ENCODE measurements at regions of chr12 and their contacts with region 1.

Region 1: DNA sequence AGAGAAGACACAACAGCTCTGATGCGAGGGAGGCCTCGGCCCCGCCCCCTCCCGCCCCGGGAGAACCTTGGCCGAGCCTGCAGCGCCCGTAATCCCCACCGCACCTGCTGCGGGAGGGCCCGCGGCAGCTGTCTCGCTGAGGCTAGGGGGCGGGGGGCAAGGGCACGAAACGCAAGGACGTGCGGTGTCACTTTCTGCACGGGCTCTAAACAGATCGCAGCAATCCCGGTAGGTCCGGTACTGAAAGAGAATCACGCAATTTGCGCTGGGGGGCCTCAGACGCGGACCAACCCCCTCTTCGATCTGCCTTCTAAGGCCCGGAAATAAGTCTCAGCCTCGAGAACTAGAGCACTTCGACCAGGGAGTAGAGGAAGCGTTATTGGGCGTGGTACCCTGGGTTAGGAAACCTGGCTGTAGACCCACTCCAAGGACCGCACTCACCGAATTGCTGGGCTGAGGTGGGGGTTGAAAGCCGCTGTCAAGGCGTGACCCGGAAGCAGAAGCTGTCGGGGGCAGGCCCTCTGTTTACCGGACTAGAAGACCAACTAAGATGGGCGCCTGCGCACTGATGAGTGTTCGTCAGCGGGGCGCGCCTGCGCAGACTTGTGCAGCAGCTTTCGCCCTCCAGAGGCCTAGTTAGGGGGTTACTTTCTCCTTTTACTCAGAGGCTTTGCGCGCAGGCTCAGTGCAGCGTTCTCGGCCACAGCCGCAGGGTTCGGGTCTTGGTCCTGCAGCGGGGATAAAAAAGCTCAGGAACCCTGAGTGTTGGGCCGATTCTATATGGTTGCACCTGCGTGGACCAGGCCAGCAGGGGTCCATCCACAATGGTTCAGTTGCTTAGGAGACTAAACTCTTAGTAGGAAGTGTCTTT is at the start of gene ASB8:
- DNase-seq: peak; percentile 99
- ATAC-seq: peak; percentile 96
- H3K4me3 Mint-ChIP-seq: peak within 1 kb of the TSS; percentile 89
- H3K27ac Mint-ChIP-seq: peak within 1 kb of the TSS; percentile 91
- H3K4me1 Mint-ChIP-seq: peaks cover 14% of the 10 kb centered on the region
- H3K27me3 Mint-ChIP-seq: no peaks in the 10 kb centered on the region; the same call in none of the 2 replicates
- CTCF ChIP-seq: no peak
- total RNA-seq, gene ASB8: 7.4 to 11.3 TPM (median 8.8 TPM) in 3 replicates

Region 2: GRCh38 chr12:47941851-47942601 is 215.2 kb before region 1 on chr12:
- CTCF ChIA-PET with region 1: interaction called, 11 read pairs
- POLR2A ChIA-PET with region 1: no interaction called
- DNase-seq: peak; percentile 89
- ATAC-seq: peak; percentile 93
- H3K4me3 Mint-ChIP-seq: peak overlapping the region; percentile 15; the same call in 1 of the 2 replicates
- H3K27ac Mint-ChIP-seq: no peak overlapping the region
- H3K4me1 Mint-ChIP-seq: peaks cover 20% of the 10 kb centered on the region
- H3K27me3 Mint-ChIP-seq: peaks cover 32% of the 10 kb centered on the region
- CTCF ChIP-seq: peak; percentile 48

Region 3: DNA sequence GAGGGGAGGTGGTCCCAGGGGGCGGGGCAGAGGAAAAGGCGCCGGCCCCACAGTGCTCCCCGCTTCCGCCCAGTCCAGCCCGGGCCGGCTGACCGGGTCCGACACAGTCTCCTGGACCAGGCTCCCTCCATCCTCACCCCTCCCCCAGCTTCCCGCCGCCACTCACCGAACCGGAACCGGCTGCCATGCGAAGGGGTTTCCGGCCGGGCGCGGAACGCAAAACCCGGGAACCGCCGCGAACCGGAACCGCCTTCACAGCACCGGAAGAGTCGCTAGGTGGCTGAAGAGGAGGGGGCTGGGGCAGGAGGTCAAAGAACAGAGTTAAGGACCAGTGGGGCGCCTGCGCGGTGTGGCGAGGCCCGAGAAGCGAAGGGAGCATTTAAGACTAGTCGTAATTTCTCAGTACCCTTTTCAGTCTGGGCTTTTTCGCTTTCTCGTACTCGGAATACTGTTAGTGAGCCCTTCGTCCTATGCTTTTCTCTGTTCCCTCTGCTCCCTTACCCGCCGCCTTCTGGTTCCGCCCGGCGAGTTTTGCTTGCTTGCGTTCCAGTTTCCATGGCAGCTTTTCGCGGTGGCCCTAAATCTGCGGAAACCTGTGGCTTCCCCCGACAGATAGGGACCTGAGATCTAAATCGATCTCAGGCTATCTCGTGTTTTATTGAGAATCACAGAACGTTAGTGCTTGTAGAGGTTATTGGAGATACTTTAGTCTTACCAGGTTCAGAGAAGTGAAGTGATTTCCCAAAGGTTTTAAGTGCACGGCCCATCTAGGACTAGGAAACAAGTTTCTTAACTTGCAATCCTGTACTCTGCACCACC is 51.2 kb before region 1 on chr12 and contains the start of gene SENP1:
- CTCF ChIA-PET with region 1: interaction called, 15 read pairs
- POLR2A ChIA-PET with region 1: interaction called, 6 read pairs
- DNase-seq: peak; percentile 93
- ATAC-seq: peak; percentile 89
- H3K4me3 Mint-ChIP-seq: peak within 1 kb of the TSS; percentile 93
- H3K27ac Mint-ChIP-seq: peak within 1 kb of the TSS; percentile 98
- H3K4me1 Mint-ChIP-seq: peaks cover 16% of the 10 kb centered on the region
- H3K27me3 Mint-ChIP-seq: peaks cover 25% of the 10 kb centered on the region
- CTCF ChIP-seq: no peak
- total RNA-seq, gene SENP1: 20.4 to 23.3 TPM (median 21.3 TPM) in 3 replicates

Region 4: GRCh38 chr12:48142818-48143674 is 14.2 kb before region 1 on chr12:
- CTCF ChIA-PET with region 1: interaction called, 21 read pairs
- POLR2A ChIA-PET with region 1: interaction called, 5 read pairs
- DNase-seq: peak; percentile 16
- ATAC-seq: peak; percentile 92
- H3K4me3 Mint-ChIP-seq: peak overlapping the region; percentile 29
- H3K27ac Mint-ChIP-seq: peak overlapping the region; percentile 95
- H3K4me1 Mint-ChIP-seq: peaks cover 42% of the 10 kb centered on the region
- H3K27me3 Mint-ChIP-seq: no peaks in the 10 kb centered on the region
- CTCF ChIP-seq: no peak

Region 5: DNA sequence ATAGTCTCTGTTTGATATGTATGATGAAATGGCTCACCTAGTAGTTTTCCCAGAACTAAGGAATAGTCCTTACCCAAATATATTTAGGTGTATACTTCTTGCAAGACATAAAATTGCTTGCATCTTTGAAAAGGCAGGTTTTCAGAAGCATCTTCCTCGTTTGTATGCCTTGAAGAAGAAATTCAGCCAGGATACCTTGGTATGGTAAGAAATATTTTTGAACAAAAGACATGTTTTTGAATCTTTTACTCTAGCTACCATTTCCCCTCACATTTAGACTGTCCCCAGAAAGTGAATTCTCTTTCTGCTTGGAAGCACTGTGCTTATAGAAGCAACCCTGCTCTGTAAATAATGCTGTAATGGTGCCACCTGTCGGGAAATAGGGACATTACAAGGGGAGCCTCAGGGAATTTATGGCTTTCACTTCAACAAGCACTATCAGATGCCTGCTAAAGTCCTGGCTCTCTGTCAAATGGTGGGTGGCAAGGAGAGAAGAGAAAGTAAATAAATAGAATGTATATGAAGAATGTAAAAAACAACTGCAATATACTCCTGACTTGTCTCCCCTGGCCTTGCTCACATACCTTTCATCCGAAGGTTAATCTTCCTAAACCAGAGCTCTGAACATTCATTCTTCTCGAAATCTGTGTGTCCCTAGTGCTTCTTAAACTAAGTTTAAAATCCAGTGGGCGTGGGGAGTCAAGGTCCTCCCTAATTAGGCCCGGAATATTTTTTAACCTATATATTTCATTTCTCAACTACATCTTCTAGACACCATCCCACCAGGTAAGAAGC is 32.3 kb after region 1 on chr12:
- CTCF ChIA-PET with region 1: interaction called, 18 read pairs
- POLR2A ChIA-PET with region 1: interaction called, 4 read pairs
- DNase-seq: peak; percentile 79
- ATAC-seq: peak; percentile 76
- H3K4me3 Mint-ChIP-seq: no peak overlapping the region
- H3K27ac Mint-ChIP-seq: no peak overlapping the region
- H3K4me1 Mint-ChIP-seq: peaks cover 15% of the 10 kb centered on the region
- H3K27me3 Mint-ChIP-seq: peaks cover 90% of the 10 kb centered on the region
- CTCF ChIP-seq: peak; percentile 63

Measured in WTC11 (cell line).